ENCODE measurements at regions of chr14 and their contacts with region 1.

Region 1: DNA sequence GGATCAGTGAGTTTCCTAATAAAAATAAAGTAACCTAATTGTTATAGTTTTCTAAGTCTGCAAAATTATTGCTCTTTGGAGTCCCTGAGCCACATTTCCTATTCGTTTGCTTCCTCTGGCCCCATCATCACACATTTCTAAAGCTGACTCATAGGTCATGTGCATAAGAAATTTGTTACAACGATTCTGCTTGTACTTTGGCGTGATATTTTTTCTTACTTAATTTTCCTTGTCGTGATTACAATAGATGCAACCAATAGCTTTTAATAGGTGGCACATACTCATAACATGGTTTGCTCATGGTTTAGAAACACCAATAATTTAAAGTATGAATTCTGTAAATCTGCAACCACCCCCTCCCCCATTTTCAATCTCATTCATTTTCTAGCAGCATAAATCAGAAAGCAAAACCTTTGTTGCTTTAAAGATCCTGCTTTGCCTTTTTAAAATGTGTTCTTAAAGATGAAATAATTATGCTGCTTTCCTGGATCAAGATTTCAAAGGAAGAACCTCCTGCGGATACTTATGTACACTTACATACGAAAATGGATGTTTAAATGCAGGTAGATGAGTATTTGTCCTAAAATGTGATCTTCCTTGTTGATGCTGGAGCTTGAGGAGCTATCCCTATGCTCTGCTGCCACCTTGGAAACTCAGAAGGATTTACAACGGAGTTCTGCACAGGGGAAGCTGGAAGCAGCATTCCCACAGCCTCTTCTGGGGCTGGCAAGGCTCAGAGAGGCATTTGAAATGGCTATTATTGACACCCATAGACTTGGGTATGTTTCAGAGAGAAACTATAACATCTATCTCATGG is 1.7 kb upstream of the FLRT2 start:
- DNase-seq: peak; percentile 40 to 64 (median 45)
- ATAC-seq: peak; percentile 64 to 71
- H3K4me3 ChIP-seq: peak overlapping the region; percentile 53
- H3K27ac ChIP-seq: no peak overlapping the region
- H3K4me1 ChIP-seq: no peaks in the 10 kb centered on the region
- H3K27me3 ChIP-seq: no peaks in the 10 kb centered on the region

Region 2: GRCh38 chr14:84006643-84007155 is 1521.6 kb before region 1 on chr14:
- intact Hi-C with region 1: loop called in 1 of 4 experiments (anchors 10 kb)
- DNase-seq: peak in 1 of 3 donors; percentile 7
- ATAC-seq: peak; percentile 71 to 73
- H3K4me3 ChIP-seq: no peak overlapping the region
- H3K27ac ChIP-seq: no peak overlapping the region
- H3K4me1 ChIP-seq: peaks cover 2% of the 10 kb centered on the region
- H3K27me3 ChIP-seq: no peaks in the 10 kb centered on the region

Region 3: GRCh38 chr14:84493779-84494178 is 1034.5 kb before region 1 on chr14:
- intact Hi-C with region 1: loop called in 1 of 4 experiments (anchors 10 kb)
- DNase-seq: no peak
- ATAC-seq: no peak
- H3K4me3 ChIP-seq: no peak overlapping the region
- H3K27ac ChIP-seq: no peak overlapping the region
- H3K4me1 ChIP-seq: no peaks in the 10 kb centered on the region
- H3K27me3 ChIP-seq: no peaks in the 10 kb centered on the region

Region 4: GRCh38 chr14:85342858-85343607 is 185.3 kb before region 1 on chr14:
- intact Hi-C with region 1: loop called in 1 of 4 experiments (anchors 10 kb)
- DNase-seq: no peak
- ATAC-seq: peak in 1 of 2 donors; percentile 75
- H3K4me3 ChIP-seq: no peak overlapping the region
- H3K27ac ChIP-seq: no peak overlapping the region
- H3K4me1 ChIP-seq: no peaks in the 10 kb centered on the region
- H3K27me3 ChIP-seq: no peaks in the 10 kb centered on the region

Region 5: GRCh38 chr14:85415015-85415712 is 113.1 kb before region 1 on chr14:
- intact Hi-C with region 1: loop called in 3 of 4 experiments (anchors 10 kb)
- DNase-seq: peak; percentile 29 to 67 (median 38)
- ATAC-seq: peak; percentile 97 to 99
- H3K4me3 ChIP-seq: peak overlapping the region; percentile 34
- H3K27ac ChIP-seq: no peak overlapping the region
- H3K4me1 ChIP-seq: no peaks in the 10 kb centered on the region
- H3K27me3 ChIP-seq: no peaks in the 10 kb centered on the region

Region 6: GRCh38 chr14:85788470-85789233 is 260.4 kb after region 1 on chr14:
- intact Hi-C with region 1: no loop called
- DNase-seq: no peak
- ATAC-seq: no peak
- H3K4me3 ChIP-seq: no peak overlapping the region
- H3K27ac ChIP-seq: no peak overlapping the region
- H3K4me1 ChIP-seq: no peaks in the 10 kb centered on the region
- H3K27me3 ChIP-seq: no peaks in the 10 kb centered on the region

Measured in right cardiac atrium (tissue), 5 donors.